PC-3 (cell line): ENCODE measurements at regions of chr1 and their contacts with region 1.

Region 1: DNA sequence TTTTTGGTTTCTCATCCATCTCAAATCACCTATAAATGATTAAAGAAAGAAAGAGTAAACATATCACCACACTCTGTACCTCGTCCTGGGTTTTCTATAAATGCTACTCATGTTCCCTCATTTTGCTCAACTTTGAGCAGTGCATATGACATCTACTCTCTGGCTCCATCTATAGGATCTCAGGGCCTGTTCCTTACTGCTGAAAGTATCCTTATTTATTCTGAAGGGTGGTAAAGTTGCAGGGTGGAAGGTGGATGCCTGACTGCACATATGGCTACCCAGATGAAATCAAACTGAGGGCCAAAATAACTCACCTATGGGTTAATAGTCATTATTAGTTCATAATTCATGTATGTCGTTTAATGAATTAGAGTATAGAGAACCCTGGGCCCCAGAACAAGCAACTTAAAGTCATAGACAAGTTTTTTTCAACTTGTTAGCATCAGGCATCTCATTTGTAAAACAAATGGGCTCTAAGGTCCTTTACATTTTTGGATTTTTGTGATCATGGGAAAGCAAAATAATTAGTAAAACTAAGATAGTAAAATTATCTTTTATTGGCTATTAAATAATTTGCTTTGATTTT is 46.5 kb downstream of the NCF2 start:
- DNase-seq: peak; percentile 66
- ATAC-seq: peak; percentile 97
- H3K4me3 ChIP-seq: no peak overlapping the region
- H3K27ac ChIP-seq: no peak overlapping the region
- H3K4me1 ChIP-seq: 0 out of 2 replicates have a peak, but pooled peaks cover 4% of the 10 kb centered on the region
- H3K27me3 ChIP-seq: no peaks in the 10 kb centered on the region
- CTCF ChIP-seq: peak; percentile 74

Region 2: GRCh38 chr1:183444243-183444642 is 99.5 kb before region 1 on chr1:
- CTCF ChIA-PET with region 1: no interaction called
- POLR2A ChIA-PET with region 1: no interaction called
- intact Hi-C with region 1: no loop called
- DNase-seq: peak; percentile 88
- ATAC-seq: peak; percentile 94
- H3K4me3 ChIP-seq: peak overlapping the region; percentile 43
- H3K27ac ChIP-seq: peak overlapping the region; percentile 90
- H3K4me1 ChIP-seq: peaks cover 39% of the 10 kb centered on the region
- H3K27me3 ChIP-seq: no peaks in the 10 kb centered on the region
- CTCF ChIP-seq: no peak

Region 3: DNA sequence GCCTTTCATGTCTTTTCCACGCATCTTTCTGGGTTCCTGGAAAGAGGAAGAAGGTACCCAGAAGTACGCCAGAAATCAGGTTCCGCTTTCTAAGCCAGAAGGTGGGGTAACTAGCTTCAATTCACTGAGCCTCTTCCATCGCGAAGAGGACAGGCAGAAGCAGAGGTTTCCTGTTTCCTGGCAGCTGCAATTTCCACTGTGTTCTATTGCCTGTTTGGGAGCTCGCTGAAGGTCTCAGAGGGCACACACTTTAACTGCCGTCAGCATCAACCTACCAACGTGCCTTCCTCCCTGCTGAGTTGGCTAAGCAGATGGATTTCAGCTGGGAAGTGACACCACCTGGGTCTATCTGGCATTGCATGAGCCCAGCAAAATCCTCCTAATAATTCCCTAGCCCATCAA is 36.6 kb after region 1 on chr1:
- CTCF ChIA-PET with region 1: no interaction called
- POLR2A ChIA-PET with region 1: no interaction called
- intact Hi-C with region 1: loop called (anchors 1 kb)
- DNase-seq: peak; percentile 54
- ATAC-seq: peak; percentile 91
- H3K4me3 ChIP-seq: no peak overlapping the region
- H3K27ac ChIP-seq: no peak overlapping the region
- H3K4me1 ChIP-seq: no peaks in the 10 kb centered on the region
- H3K27me3 ChIP-seq: no peaks in the 10 kb centered on the region
- CTCF ChIP-seq: peak; percentile 45

Region 4: GRCh38 chr1:183593356-183593755 is 49.6 kb after region 1 on chr1:
- CTCF ChIA-PET with region 1: no interaction called
- POLR2A ChIA-PET with region 1: no interaction called
- intact Hi-C with region 1: no loop called
- DNase-seq: no peak
- ATAC-seq: no peak
- H3K4me3 ChIP-seq: no peak overlapping the region
- H3K27ac ChIP-seq: no peak overlapping the region
- H3K4me1 ChIP-seq: peaks cover 12% of the 10 kb centered on the region
- H3K27me3 ChIP-seq: no peaks in the 10 kb centered on the region
- CTCF ChIP-seq: no peak

Region 5: DNA sequence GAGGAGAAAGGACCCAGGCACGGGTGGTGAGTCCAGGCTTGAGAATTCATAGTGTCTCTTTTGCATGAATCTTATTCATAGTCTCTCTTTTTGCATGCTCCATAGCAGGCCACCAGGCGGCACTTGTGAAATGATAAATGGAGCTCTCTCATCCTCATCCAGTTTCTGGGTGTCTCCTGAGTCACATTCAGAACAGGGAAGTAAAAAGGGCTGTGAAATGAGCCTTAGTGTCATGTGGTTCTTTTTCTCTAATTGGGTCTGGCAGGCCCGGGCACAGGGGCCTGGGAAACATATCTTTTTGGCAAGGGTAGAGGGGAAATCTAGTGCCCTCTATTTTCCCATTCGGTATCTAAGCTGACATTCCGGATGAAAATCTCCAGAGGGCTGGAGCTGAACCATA is 65.6 kb after region 1 on chr1:
- CTCF ChIA-PET with region 1: no interaction called
- POLR2A ChIA-PET with region 1: no interaction called
- intact Hi-C with region 1: no loop called
- DNase-seq: peak; percentile 68
- ATAC-seq: peak; percentile 51
- H3K4me3 ChIP-seq: no peak overlapping the region
- H3K27ac ChIP-seq: peak overlapping the region; percentile 71
- H3K4me1 ChIP-seq: peaks cover 44% of the 10 kb centered on the region
- H3K27me3 ChIP-seq: no peaks in the 10 kb centered on the region
- CTCF ChIP-seq: peak; percentile 65

Region 6: DNA sequence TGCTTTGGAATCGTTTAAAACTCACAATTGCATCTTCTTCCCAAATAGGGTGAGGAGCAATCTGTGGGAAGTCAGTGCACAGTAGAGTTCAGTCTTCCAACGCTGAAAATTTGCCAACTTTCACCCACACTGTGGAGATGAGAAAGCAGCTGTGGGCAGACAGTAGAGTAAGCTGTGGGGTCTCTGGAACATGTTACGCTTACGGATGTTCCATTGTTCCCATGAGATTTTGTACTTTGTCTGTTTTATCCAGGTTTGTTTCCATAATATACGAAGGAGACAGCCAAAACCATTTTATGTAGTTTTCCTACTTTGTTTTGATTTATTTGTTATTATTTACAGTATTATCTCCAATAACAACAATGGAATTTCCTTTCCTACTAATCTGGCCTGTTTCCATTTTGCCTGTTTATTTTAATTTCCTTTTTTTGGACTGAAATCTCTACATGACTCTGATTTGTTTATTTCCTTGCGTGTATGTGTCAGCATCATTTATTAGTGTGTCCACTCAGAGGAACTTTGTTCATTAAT is 196.1 kb after region 1 on chr1:
- CTCF ChIA-PET with region 1: no interaction called
- POLR2A ChIA-PET with region 1: no interaction called
- intact Hi-C with region 1: no loop called
- DNase-seq: no peak
- ATAC-seq: no peak
- H3K4me3 ChIP-seq: no peak overlapping the region
- H3K27ac ChIP-seq: no peak overlapping the region
- H3K4me1 ChIP-seq: no peaks in the 10 kb centered on the region
- H3K27me3 ChIP-seq: no peaks in the 10 kb centered on the region
- CTCF ChIP-seq: no peak